OCI-LY7 (cell line): ENCODE measurements at regions of chr20 and their contacts with region 1.

Region 1: GRCh38 chr20:5674176-5674660 is 76.0 kb upstream of the SHLD1 start:
- DNase-seq: peak; percentile 94
- H3K4me3 ChIP-seq: peak overlapping the region; percentile 61
- H3K27ac ChIP-seq: peak overlapping the region; percentile 94
- H3K4me1 ChIP-seq: peaks cover 99% of the 10 kb centered on the region
- CTCF ChIP-seq: 0 out of 2 replicates have a peak, but pooled peaks have one; percentile 30

Region 2: DNA sequence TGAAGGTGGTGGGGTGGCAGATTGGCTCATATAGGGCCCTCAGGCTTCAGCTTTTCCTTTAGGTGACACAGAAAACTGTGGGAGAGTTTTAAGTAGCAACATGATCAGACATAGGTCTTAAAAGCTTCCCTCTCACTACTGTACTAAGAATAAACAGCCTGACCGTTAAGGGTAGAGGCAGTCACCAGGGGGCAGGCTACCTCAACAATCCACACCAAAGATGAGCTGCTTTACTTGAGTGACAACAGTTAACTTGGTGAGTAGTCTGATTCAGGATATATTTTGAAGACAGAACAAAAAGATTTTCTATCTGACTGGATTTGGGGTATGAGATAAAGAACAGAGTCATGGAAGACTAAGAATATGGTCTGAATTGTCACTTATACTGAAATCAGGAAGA is 117.1 kb before region 1 on chr20:
- CTCF ChIA-PET with region 1: no interaction called
- POLR2A ChIA-PET with region 1: no interaction called
- intact Hi-C with region 1: no loop called
- DNase-seq: peak; percentile 75
- H3K4me3 ChIP-seq: no peak overlapping the region
- H3K27ac ChIP-seq: no peak overlapping the region
- H3K4me1 ChIP-seq: no peaks in the 10 kb centered on the region
- CTCF ChIP-seq: peak; percentile 91

Region 3: GRCh38 chr20:5596401-5597193 is 77.6 kb before region 1 on chr20:
- CTCF ChIA-PET with region 1: no interaction called
- POLR2A ChIA-PET with region 1: interaction called, 5 read pairs
- intact Hi-C with region 1: loop called (anchors 5 kb)
- DNase-seq: no peak
- H3K4me3 ChIP-seq: peak overlapping the region; percentile 3
- H3K27ac ChIP-seq: peak overlapping the region; percentile 97
- H3K4me1 ChIP-seq: peaks cover 100% of the 10 kb centered on the region
- CTCF ChIP-seq: no peak

Region 4: DNA sequence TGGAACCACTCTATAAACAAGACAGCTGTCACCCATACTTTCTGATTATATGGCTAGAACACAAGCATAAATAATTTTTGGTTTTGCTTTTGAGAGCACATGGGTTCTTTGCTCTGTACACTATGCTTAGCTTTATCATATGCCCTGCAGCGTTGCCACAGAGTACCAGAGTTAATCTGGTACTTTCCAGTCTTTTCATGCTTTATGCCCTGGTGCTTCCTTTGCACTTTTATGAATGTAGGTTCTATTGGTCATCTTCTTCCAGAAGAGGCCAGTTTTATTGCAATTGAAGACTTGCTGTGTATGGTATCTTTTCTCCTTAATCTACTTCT is 96.7 kb after region 1 on chr20:
- CTCF ChIA-PET with region 1: no interaction called
- POLR2A ChIA-PET with region 1: interaction called, 3 read pairs
- intact Hi-C with region 1: loop called (anchors 2 kb)
- DNase-seq: peak; percentile 50
- H3K4me3 ChIP-seq: peak overlapping the region; percentile 33
- H3K27ac ChIP-seq: peak overlapping the region; percentile 80
- H3K4me1 ChIP-seq: peaks cover 63% of the 10 kb centered on the region
- CTCF ChIP-seq: no peak